ENCODE measurements at regions of chr7 and their contacts with region 1.

Region 1: DNA sequence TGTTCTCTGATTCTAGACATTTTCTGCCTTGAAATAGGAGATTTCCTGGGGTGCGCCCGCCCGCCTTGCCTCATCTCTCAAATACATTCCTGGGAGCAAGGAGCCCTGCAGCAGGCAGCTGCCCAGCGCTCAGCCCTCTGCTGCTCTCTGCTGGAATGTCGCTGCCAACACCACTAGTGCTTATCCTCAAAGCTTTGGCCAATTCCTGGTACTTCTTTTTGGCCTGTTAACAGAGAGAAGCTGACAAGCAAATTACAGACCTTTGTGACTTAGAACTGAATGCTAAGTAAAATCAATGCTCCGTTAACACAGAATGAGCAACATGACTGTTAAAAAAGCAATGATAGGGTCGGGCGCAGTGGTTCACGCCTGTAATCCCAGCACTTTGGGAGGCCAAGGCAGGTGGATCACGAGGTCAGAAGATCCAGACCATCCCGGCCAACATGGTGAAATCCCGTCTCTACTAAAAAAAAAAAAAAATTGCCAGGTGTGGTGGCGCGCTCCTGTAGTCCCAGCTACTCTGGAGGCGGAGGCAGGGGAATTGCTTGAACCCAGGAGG is 41.9 kb upstream of the SYPL1 start:
- DNase-seq: peak; percentile 84
- H3K4me3 Mint-ChIP-seq: no peak overlapping the region
- H3K27ac Mint-ChIP-seq: no peak overlapping the region
- H3K4me1 Mint-ChIP-seq: peaks cover 9% of the 10 kb centered on the region
- H3K27me3 Mint-ChIP-seq: peaks cover 39% of the 10 kb centered on the region
- CTCF ChIP-seq: peak; percentile 82

Region 2: GRCh38 chr7:105638902-105639495 is 515.0 kb before region 1 on chr7:
- CTCF ChIA-PET with region 1: no interaction called
- intact Hi-C with region 1: no loop called
- DNase-seq: no peak
- H3K4me3 Mint-ChIP-seq: no peak overlapping the region
- H3K27ac Mint-ChIP-seq: no peak overlapping the region
- H3K4me1 Mint-ChIP-seq: no peaks in the 10 kb centered on the region
- H3K27me3 Mint-ChIP-seq: no peaks in the 10 kb centered on the region
- CTCF ChIP-seq: no peak

Region 3: DNA sequence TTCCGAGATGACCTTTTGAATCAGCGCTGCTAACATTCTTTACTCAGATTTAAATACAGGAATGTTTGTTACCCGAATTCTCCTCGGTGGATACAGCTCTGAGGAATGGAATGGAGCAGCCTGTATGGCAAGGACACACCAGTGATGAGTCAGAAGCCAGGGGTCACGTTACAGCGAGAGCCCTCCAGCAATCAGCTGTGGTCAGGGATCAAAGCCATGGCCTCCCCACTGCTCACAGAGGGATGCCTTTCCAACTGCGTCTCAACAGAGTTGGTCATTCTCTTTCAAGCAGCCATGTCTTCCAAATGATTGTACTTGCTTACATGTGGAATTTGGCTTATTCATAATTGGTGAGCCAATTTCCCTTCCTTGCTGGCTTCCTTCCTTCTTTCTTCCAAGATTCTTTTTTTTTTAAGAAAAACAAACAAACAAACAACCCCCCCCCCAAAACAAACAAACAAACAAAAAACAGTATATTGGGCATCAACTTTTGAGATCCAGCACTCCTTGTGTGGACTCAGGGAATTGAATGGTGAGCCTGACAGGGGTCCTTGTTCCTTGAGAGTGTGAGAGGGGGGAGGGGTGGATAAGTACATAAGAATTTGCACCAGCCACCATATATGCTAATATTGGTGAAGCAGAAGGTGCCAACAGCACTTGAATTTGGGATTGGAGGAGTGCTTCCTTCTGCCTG is 377.8 kb before region 1 on chr7:
- CTCF ChIA-PET with region 1: no interaction called
- intact Hi-C with region 1: loop called (anchors 10 kb)
- DNase-seq: peak; percentile 18
- H3K4me3 Mint-ChIP-seq: no peak overlapping the region
- H3K27ac Mint-ChIP-seq: no peak overlapping the region
- H3K4me1 Mint-ChIP-seq: peaks cover 7% of the 10 kb centered on the region
- H3K27me3 Mint-ChIP-seq: no peaks in the 10 kb centered on the region
- CTCF ChIP-seq: no peak

Region 4: GRCh38 chr7:106056513-106057203 is 97.3 kb before region 1 on chr7:
- CTCF ChIA-PET with region 1: interaction called, 13 read pairs
- intact Hi-C with region 1: loop called (anchors 1 kb)
- DNase-seq: peak; percentile 73
- H3K4me3 Mint-ChIP-seq: no peak overlapping the region
- H3K27ac Mint-ChIP-seq: no peak overlapping the region
- H3K4me1 Mint-ChIP-seq: peaks cover 16% of the 10 kb centered on the region
- H3K27me3 Mint-ChIP-seq: peaks cover 26% of the 10 kb centered on the region
- CTCF ChIP-seq: peak; percentile 77

Region 5: DNA sequence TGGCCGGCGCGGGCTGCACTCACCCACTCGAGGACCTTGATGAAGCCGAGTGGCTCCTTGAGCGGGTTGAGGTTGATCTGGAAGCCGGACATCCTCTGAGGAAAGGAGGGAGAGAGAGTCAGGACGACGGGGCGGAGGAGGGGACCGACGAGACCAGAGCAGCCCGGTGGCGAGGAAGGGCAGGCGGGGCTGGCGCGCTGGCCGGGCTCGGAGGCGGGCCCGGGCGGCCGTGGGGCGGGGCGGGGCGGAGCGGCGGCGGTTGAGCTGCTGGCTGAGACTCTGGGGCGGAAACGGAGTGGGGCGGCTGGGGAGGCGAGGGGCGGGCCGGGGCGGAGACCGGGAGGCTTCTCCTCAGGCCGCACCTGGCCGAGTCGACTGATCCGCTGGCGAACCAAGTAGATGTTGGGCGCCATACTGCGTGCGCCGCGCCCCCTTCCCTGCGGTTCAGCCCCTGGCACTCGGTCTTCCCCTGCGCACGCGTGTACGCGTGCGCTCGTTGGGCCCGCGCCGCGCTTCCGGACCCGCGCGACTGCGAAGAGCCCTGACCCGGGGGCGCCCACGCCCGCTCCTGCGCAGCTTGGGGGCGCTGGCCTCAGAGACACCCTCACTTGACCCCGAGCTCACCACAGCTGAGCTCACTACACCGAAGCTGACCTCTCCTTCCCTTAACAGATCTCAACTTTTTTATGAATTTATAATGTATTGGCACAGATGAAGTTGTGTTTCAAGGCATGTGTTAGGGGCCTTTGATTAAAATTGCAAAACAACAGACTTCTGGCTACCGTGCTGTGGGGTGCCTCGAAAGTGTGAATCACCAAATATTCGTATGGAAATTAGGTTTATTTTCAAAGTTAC is 41.6 kb before region 1 on chr7 and contains the start of gene SYPL1:
- CTCF ChIA-PET with region 1: interaction called, 10 read pairs
- intact Hi-C with region 1: no loop called
- DNase-seq: peak; percentile 96
- H3K4me3 Mint-ChIP-seq: peak within 1 kb of the TSS; percentile 90
- H3K27ac Mint-ChIP-seq: peak within 1 kb of the TSS; percentile 79
- H3K4me1 Mint-ChIP-seq: peaks cover 23% of the 10 kb centered on the region
- H3K27me3 Mint-ChIP-seq: no peaks in the 10 kb centered on the region
- CTCF ChIP-seq: no peak
- total RNA-seq, gene SYPL1: 76.1 and 88.3 TPM in 2 replicates

Region 6: GRCh38 chr7:106273009-106273668 is 119.2 kb after region 1 on chr7:
- CTCF ChIA-PET with region 1: no interaction called
- intact Hi-C with region 1: no loop called
- DNase-seq: no peak
- H3K4me3 Mint-ChIP-seq: no peak overlapping the region
- H3K27ac Mint-ChIP-seq: peak overlapping the region; percentile 41
- H3K4me1 Mint-ChIP-seq: peaks cover 30% of the 10 kb centered on the region
- H3K27me3 Mint-ChIP-seq: no peaks in the 10 kb centered on the region
- CTCF ChIP-seq: no peak